ENCODE measurements at regions of chr15 and their contacts with region 1.

Region 1: GRCh38 chr15:38508647-38509046 is 54.7 kb downstream of the FAM98B start:
- DNase-seq: peak; percentile 55
- H3K4me3 Mint-ChIP-seq: no peak overlapping the region
- H3K27ac Mint-ChIP-seq: peak overlapping the region; percentile 88
- H3K4me1 Mint-ChIP-seq: peaks cover 38% of the 10 kb centered on the region
- H3K27me3 Mint-ChIP-seq: no peaks in the 10 kb centered on the region

Region 2: DNA sequence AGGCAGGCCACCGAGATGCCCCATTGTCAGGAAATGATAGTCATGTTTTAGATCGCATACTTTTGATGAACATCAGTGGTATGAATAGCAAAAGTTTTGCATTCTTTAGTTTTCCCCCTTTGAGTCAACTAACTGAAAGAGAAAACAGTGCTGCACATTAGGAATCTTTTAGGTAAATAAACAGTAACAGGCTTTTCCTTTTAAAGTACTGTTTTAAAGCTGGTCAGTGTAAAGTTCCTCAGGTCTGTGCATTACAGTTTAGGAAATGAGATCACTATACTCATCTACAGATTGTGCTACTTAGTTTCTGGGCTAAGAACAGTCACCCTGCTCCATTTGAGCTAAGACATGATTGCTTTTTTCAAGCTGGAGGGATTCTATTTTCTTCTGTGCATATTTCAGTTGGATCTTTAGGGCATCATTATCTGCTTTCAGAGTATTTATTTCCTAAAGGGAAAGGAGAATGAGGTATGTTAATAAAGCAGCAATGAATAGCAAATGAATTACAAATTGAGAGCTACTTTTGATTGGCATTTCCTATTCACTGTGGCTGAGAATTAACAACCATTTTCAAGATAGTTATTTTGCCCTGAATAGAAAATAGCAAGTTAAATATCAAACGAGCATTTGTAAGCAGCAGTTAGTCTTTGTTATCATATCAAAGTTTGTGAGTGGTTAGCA is 18.3 kb before region 1 on chr15:
- CTCF ChIA-PET with region 1: no interaction called
- POLR2A ChIA-PET with region 1: interaction called, 7 read pairs
- intact Hi-C with region 1: loop called (anchors 2 kb)
- DNase-seq: no peak
- H3K4me3 Mint-ChIP-seq: no peak overlapping the region
- H3K27ac Mint-ChIP-seq: peak overlapping the region; percentile 61
- H3K4me1 Mint-ChIP-seq: peaks cover 66% of the 10 kb centered on the region
- H3K27me3 Mint-ChIP-seq: no peaks in the 10 kb centered on the region

Region 3: DNA sequence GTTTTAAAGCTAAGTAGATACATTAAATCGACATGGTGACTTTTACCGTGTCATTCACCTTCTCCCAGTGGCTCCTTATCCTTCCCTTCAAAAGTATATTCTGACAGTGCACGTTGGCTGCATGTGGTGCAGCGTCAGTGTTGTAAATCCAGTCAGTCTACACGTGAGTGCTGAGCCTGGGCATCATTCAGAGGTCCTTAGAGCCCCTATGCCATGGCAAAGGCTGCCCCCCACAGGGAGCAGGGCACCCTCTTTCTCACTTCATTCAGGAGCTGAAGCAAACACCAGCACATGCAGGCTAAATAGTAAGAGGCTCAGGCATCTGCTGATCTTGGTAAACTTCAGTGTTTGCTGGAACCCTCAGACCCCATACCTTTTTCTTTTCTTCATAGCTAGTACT is 12.7 kb after region 1 on chr15:
- CTCF ChIA-PET with region 1: no interaction called
- POLR2A ChIA-PET with region 1: interaction called, 4 read pairs
- intact Hi-C with region 1: loop called (anchors 2 kb)
- DNase-seq: no peak
- H3K4me3 Mint-ChIP-seq: no peak overlapping the region
- H3K27ac Mint-ChIP-seq: peak overlapping the region; percentile 15
- H3K4me1 Mint-ChIP-seq: peaks cover 72% of the 10 kb centered on the region
- H3K27me3 Mint-ChIP-seq: no peaks in the 10 kb centered on the region

Region 4: GRCh38 chr15:38603672-38604071 is 95.0 kb after region 1 on chr15:
- CTCF ChIA-PET with region 1: no interaction called
- POLR2A ChIA-PET with region 1: no interaction called
- intact Hi-C with region 1: no loop called
- DNase-seq: no peak
- H3K4me3 Mint-ChIP-seq: no peak overlapping the region
- H3K27ac Mint-ChIP-seq: no peak overlapping the region
- H3K4me1 Mint-ChIP-seq: peaks cover 41% of the 10 kb centered on the region
- H3K27me3 Mint-ChIP-seq: no peaks in the 10 kb centered on the region